Transverse colon (tissue), 4 donors: ENCODE measurements at regions of chr9 and their contacts with region 1.

Region 1: DNA sequence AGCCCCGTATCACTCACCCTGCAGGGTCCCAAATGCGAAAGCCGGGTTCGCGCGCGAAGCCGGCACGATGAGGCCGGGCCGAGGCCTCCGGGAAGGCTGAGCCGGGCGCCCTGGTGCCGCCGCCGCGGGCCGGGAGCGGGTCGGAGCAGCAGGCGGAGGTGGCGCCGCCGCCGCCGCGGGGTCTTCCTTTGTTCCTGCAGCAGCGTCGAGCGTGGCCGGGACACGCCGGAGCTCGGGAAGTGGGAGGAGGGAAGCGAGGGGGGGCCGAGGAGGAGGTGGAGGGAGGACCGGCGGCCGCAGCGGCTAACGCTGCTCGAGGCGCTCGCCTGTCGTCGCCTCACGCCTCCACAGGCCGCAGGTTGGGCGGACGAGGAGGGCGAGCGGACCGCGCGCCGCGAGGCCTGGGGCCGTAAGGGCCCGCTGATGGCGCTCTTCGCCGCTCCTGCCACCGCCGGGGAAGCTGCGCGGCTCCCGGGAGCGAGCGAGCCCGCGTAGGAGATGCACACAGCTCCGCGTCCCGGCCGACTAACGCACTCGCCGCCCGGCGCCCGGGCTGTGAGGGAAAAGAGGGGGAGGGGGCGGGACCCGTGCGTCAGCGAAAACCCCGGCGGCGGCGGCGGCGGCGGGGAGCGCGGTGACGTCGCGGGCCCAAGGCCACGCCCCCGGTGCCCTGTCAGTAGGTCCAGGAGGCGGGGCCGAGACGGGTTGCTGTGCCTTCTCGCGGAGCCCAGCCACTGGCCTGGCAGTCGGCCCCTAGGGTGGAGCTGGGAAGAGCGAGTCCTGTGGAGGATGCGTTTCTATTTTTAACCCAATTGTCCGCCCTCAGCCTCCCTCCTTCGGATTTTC is at the start of gene ZFAND5:
- DNase-seq: peak; percentile 98
- H3K4me3 ChIP-seq: peak within 1 kb of the TSS; percentile 83 to 98 (median 98)
- H3K27ac ChIP-seq: peak within 1 kb of the TSS; percentile 99 to 100 (median 100)
- H3K4me1 ChIP-seq: peaks cover 0 to 48% (median 35%) of the 10 kb centered on the region in 4 donors
- H3K27me3 ChIP-seq: no peaks in the 10 kb centered on the region
- CTCF ChIP-seq: peak in 2 of 5 experiments; percentile 6 to 17
- EP300 ChIP-seq: peak; percentile 63
- POLR2A ChIP-seq: peak; percentile 100
- total RNA-seq, gene ZFAND5: 49.0 to 190 (median 98.2) TPM

Region 2: GRCh38 chr9:70413798-70414775 is 1950.8 kb before region 1 on chr9 and contains the start of gene KLF9:
- in situ Hi-C with region 1: no loop called
- intact Hi-C with region 1: loop called (anchors 10 kb)
- DNase-seq: peak; percentile 95
- H3K4me3 ChIP-seq: peak within 1 kb of the TSS; percentile 89 to 96 (median 92)
- H3K27ac ChIP-seq: peak within 1 kb of the TSS; percentile 99 to 100 (median 100)
- H3K4me1 ChIP-seq: peaks cover 21 to 59% (median 44%) of the 10 kb centered on the region in 4 donors
- H3K27me3 ChIP-seq: no peaks in the 10 kb centered on the region
- CTCF ChIP-seq: peak in 1 of 5 experiments; percentile 4
- EP300 ChIP-seq: peak; percentile 91
- POLR2A ChIP-seq: peak; percentile 99
- total RNA-seq, gene KLF9: 60.3 to 111 (median 82.9) TPM

Region 3: DNA sequence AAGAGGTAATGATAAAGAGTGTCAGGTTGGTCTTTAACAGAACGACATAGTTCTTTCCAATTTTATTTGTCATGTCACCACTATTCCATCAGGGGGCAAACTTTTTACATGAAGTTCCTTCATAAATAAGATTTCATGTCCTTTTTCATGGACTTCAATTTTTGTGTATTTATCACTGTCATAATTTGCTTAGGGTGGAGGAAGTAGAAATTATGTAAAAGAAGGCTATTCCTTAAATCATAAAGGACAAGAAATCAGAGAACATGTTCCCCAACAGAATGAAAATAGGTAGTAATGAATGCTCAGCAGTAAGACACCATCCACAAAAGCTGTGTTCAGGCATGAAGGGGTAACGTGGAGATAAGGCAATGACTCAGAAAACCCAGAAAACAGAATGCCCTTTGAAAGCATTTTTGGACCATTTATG is 72.6 kb before region 1 on chr9:
- in situ Hi-C with region 1: loop called in 1 of 4 experiments (anchors 10 kb)
- intact Hi-C with region 1: no loop called
- DNase-seq: no peak
- H3K4me3 ChIP-seq: no peak overlapping the region
- H3K27ac ChIP-seq: peak overlapping the region; percentile 74 to 83 (median 82)
- H3K4me1 ChIP-seq: peaks cover 11 to 44% (median 21%) of the 10 kb centered on the region in 4 donors
- H3K27me3 ChIP-seq: no peaks in the 10 kb centered on the region
- CTCF ChIP-seq: peak; percentile 56 to 75 (median 60)
- EP300 ChIP-seq: no peak
- POLR2A ChIP-seq: no peak

Region 4: DNA sequence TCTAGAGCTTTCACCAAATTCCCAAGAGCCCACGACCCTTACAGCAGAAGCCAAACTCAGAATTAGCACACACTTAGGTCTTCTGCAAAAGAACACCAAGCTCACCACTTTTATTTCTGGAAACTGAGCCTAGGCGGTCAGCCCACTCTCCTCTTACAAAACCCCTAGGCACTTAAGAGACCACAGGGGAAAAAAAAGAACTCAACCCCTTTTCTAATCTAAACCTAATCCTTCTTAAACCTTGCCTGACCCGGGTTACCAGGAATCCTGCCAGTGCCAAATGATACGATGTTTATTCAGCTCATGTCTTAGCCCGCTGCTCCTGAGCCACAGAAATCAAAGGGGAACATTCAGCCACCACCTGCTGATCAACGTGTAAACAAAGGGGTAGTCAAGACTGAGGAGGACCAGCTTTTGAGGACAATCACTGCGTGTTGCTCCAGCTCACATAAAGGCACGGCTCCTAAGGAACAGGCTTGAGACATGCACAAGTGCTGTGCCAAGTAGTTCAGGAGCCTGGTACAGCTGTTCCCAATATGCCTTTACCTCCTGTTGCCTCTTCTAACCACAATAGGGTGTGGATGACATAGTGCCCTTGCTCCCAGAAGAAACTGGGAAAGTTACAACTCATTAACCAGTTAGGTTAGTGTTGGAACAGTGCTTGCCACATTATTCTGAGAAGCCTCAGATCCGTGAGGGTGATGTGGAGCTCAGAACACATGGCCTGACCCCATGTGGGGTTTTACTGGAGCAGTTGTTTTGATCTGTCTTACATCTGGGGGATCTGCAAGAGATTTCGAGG is 49.2 kb before region 1 on chr9:
- in situ Hi-C with region 1: no loop called
- intact Hi-C with region 1: loop called (anchors 2 kb)
- DNase-seq: peak; percentile 50
- H3K4me3 ChIP-seq: peak overlapping the region in 1 of 4 donors; percentile 7
- H3K27ac ChIP-seq: peak overlapping the region; percentile 82 to 88 (median 86)
- H3K4me1 ChIP-seq: peaks cover 25 to 51% (median 38%) of the 10 kb centered on the region in 4 donors
- H3K27me3 ChIP-seq: no peaks in the 10 kb centered on the region
- CTCF ChIP-seq: no peak
- EP300 ChIP-seq: no peak
- POLR2A ChIP-seq: peak; percentile 15

Region 5: GRCh38 chr9:72349240-72349639 is 15.7 kb before region 1 on chr9:
- in situ Hi-C with region 1: no loop called
- intact Hi-C with region 1: no loop called
- DNase-seq: no peak
- H3K4me3 ChIP-seq: no peak overlapping the region
- H3K27ac ChIP-seq: no peak overlapping the region
- H3K4me1 ChIP-seq: peaks cover 4 to 12% (median 8%) of the 10 kb centered on the region in 4 donors
- H3K27me3 ChIP-seq: no peaks in the 10 kb centered on the region
- CTCF ChIP-seq: no peak
- EP300 ChIP-seq: no peak
- POLR2A ChIP-seq: no peak

Region 6: GRCh38 chr9:72443855-72444254 is 79.0 kb after region 1 on chr9:
- in situ Hi-C with region 1: no loop called
- intact Hi-C with region 1: loop called (anchors 2 kb)
- DNase-seq: no peak
- H3K4me3 ChIP-seq: no peak overlapping the region
- H3K27ac ChIP-seq: peak overlapping the region in 1 of 4 donors; percentile 22
- H3K4me1 ChIP-seq: peaks cover 0 to 7% (median 0%) of the 10 kb centered on the region in 4 donors
- H3K27me3 ChIP-seq: no peaks in the 10 kb centered on the region
- CTCF ChIP-seq: no peak
- EP300 ChIP-seq: no peak
- POLR2A ChIP-seq: no peak

Region 7: GRCh38 chr9:72586388-72587130 is 221.7 kb after region 1 on chr9:
- in situ Hi-C with region 1: no loop called
- intact Hi-C with region 1: loop called (anchors 5 kb)
- DNase-seq: peak; percentile 44
- H3K4me3 ChIP-seq: no peak overlapping the region
- H3K27ac ChIP-seq: peak overlapping the region; percentile 37 to 73 (median 59)
- H3K4me1 ChIP-seq: peaks cover 22 to 53% (median 38%) of the 10 kb centered on the region in 4 donors
- H3K27me3 ChIP-seq: no peaks in the 10 kb centered on the region
- CTCF ChIP-seq: no peak
- EP300 ChIP-seq: no peak
- POLR2A ChIP-seq: no peak